GM12878 (cell line): ENCODE measurements at regions of chr2 and their contacts with region 1.

Region 1: GRCh38 chr2:148989882-148990493 is 48.5 kb upstream of the LYPD6B start:
- DNase-seq: peak; percentile 23
- ATAC-seq: peak; percentile 98
- H3K4me3 ChIP-seq: no peak overlapping the region
- H3K27ac ChIP-seq: no peak overlapping the region
- H3K4me1 ChIP-seq: no peaks in the 10 kb centered on the region
- H3K27me3 ChIP-seq: no peaks in the 10 kb centered on the region
- CTCF ChIP-seq: peak; percentile 57 to 76 (median 72); a peak in 5 of 6 replicates
- EP300 ChIP-seq: no peak
- POLR2A ChIP-seq: no peak
- RAD21 ChIP-seq: peak; percentile 97

Region 2: GRCh38 chr2:147937744-147938349 is 1052.1 kb before region 1 on chr2:
- CTCF ChIA-PET with region 1: interaction called, 13 read pairs
- POLR2A ChIA-PET with region 1: no interaction called
- RAD21 ChIA-PET with region 1: interaction called, 3 read pairs
- SMC1A ChIA-PET with region 1: no interaction called
- in situ Hi-C with region 1: loop called (anchors 5 kb)
- intact Hi-C with region 1: loop called (anchors 2 kb)
- DNase-seq: no peak
- ATAC-seq: peak; percentile 77
- H3K4me3 ChIP-seq: no peak overlapping the region
- H3K27ac ChIP-seq: no peak overlapping the region
- H3K4me1 ChIP-seq: no peaks in the 10 kb centered on the region
- H3K27me3 ChIP-seq: no peaks in the 10 kb centered on the region
- CTCF ChIP-seq: peak; percentile 75 to 80 (median 79)
- EP300 ChIP-seq: no peak
- POLR2A ChIP-seq: no peak
- RAD21 ChIP-seq: peak; percentile 78

Region 3: DNA sequence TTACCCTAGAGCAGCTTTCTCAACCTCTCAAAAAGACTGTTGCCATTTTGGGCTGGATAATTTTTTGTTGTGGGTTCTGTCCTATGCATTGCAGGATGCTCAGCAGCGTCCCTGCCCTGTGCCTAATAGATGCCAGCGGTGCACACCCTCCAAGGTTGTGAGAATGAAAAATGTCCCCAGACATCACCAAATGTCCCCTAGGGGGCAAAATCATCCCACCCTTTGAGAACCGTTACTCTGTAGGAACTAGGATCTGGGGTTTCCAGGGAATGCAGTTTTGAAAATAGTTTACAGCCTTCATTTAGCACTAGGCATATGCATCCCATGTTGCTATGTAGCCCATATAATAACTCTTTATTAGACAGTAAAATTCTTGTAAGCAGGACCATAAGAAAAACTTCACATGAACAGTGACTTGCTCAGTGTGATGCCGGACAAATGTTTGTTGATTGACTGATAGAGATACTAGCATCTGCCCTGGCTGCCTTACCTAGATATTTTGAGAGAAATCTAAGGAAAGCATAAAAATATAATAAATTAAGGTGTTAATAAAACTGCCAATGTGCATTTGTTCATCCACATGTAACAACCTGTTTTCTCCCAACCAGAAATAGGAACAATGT is 424.6 kb before region 1 on chr2:
- CTCF ChIA-PET with region 1: interaction called, 3 read pairs
- POLR2A ChIA-PET with region 1: no interaction called
- RAD21 ChIA-PET with region 1: no interaction called
- SMC1A ChIA-PET with region 1: interaction called, 3 read pairs
- in situ Hi-C with region 1: no loop called
- intact Hi-C with region 1: loop called (anchors 5 kb)
- DNase-seq: no peak
- ATAC-seq: no peak
- H3K4me3 ChIP-seq: no peak overlapping the region
- H3K27ac ChIP-seq: no peak overlapping the region
- H3K4me1 ChIP-seq: no peaks in the 10 kb centered on the region
- H3K27me3 ChIP-seq: no peaks in the 10 kb centered on the region; a peak in 1 of 4 replicates
- CTCF ChIP-seq: peak in 2 of 3 experiments; percentile 25 to 31; a peak in 3 of 6 replicates
- EP300 ChIP-seq: no peak
- POLR2A ChIP-seq: no peak
- RAD21 ChIP-seq: peak; percentile 57

Region 4: GRCh38 chr2:148817210-148817708 is 172.7 kb before region 1 on chr2:
- CTCF ChIA-PET with region 1: no interaction called
- POLR2A ChIA-PET with region 1: no interaction called
- RAD21 ChIA-PET with region 1: no interaction called
- SMC1A ChIA-PET with region 1: no interaction called
- in situ Hi-C with region 1: no loop called
- intact Hi-C with region 1: no loop called
- DNase-seq: no peak
- ATAC-seq: no peak
- H3K4me3 ChIP-seq: peak overlapping the region; percentile 24; the same call in 1 of the 2 replicates
- H3K27ac ChIP-seq: no peak overlapping the region
- H3K4me1 ChIP-seq: peaks cover 16% of the 10 kb centered on the region
- H3K27me3 ChIP-seq: peaks cover 0 to 4% of the 10 kb centered on the region in 2 experiments; a peak in 2 of 4 replicates
- CTCF ChIP-seq: no peak
- EP300 ChIP-seq: no peak
- POLR2A ChIP-seq: no peak
- RAD21 ChIP-seq: no peak

Region 5: DNA sequence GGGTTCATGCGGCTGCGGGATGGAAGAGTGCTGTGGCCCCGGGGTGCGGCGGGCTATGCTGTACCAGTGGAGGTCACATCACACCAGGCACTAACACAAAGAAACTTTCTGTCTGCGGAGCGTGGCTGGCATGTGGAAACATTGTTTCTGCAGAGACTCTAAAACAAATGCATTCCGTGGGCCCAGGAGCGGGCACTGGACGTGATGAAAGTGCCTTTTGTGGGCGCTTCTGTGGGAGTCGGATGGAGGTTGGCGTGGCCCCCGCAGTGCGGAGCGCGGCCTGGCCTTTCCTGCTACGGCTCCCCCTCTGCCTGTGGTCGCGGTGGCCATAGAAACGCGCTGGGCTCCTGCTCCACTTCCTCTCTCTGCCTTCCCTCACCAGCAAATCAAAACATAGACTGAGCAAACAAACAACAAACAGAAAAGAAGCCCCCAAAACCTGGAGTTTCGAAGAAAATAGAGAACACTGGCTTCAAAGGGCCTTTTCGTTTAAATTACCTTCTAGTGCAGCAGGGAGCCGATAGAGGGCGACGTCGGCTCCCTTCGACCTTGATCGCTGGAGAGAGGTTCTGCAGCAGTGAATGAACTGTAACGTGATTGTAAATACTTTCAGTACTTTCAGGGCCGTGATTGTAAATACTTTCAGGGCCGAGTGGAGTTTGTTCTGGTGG is 63.6 kb before region 1 on chr2:
- CTCF ChIA-PET with region 1: interaction called, 15 read pairs
- POLR2A ChIA-PET with region 1: no interaction called
- RAD21 ChIA-PET with region 1: interaction called, 4 read pairs
- SMC1A ChIA-PET with region 1: interaction called, 9 read pairs
- in situ Hi-C with region 1: no loop called
- intact Hi-C with region 1: loop called (anchors 1 kb)
- DNase-seq: peak; percentile 9
- ATAC-seq: peak; percentile 96
- H3K4me3 ChIP-seq: 0 out of 2 replicates have a peak overlapping the region, but pooled peaks have one; percentile 24
- H3K27ac ChIP-seq: no peak overlapping the region
- H3K4me1 ChIP-seq: no peaks in the 10 kb centered on the region
- H3K27me3 ChIP-seq: no peaks in the 10 kb centered on the region; a peak in 1 of 4 replicates
- CTCF ChIP-seq: peak; percentile 76 to 82 (median 80)
- EP300 ChIP-seq: no peak
- POLR2A ChIP-seq: no peak
- RAD21 ChIP-seq: peak; percentile 79